Posterior vena cava (tissue), 2 donors: ENCODE measurements at regions of chr3 and their contacts with region 1.

Region 1: GRCh38 chr3:6965881-6966280 is 105.0 kb downstream of the GRM7 start:
- DNase-seq: no peak

Region 2: DNA sequence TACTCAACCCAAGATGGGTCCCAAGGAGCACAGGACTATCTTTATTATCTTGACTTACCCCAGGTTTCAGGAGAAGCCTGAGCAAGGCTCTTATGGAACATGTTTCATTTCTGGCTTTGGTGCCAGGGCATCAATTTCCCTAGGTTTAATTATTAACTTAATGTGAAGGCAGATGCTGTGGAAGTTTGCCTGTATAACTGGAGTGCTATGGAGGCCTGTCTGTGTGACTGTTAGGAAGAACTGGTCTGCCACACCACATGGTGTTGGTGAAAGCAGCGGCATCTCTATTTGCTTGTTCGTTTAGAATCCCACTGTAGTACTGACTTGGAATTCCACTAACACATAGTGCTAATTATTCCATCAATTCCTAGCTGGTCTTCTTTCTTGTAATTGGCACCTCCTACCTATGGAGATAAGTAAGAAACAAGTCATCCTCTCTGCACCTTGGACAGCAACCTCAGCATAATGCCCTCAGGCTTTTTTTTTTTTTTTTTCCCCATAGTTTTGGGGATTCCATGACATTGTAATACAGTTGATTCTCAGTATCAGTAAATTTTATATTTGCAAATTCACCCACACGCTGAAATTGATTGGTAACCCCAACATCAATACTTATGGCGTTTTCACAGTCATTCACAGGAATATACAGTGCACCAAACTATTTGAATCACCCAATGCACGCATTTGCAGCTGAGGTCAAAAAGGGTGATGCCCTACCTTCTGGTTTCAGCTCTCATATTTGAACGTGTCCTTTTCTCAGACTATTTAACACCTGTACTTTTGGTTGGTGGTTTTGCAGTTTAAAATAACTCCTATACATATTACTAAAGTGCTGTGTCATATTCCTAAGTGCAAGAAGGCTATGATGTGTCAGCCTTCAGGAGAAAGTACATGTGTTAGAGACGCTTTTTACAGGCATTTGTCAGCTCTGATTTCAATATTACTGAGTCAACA is 763.0 kb after region 1 on chr3:
- intact Hi-C with region 1: loop called in 1 of 2 experiments (anchors 5 kb)
- DNase-seq: no peak